Calu3 (cell line): ENCODE measurements at regions of chr12 and their contacts with region 1.

Region 1: GRCh38 chr12:104877123-104877705 is 80.9 kb downstream of the SLC41A2 start:
- DNase-seq: peak; percentile 46
- H3K4me3 Mint-ChIP-seq: no peak overlapping the region
- H3K27ac Mint-ChIP-seq: no peak overlapping the region
- H3K4me1 Mint-ChIP-seq: no peaks in the 10 kb centered on the region
- H3K27me3 Mint-ChIP-seq: no peaks in the 10 kb centered on the region
- CTCF ChIP-seq: peak; percentile 17

Region 2: GRCh38 chr12:104201238-104202001 is 675.8 kb before region 1 on chr12:
- CTCF ChIA-PET with region 1: no interaction called
- intact Hi-C with region 1: loop called (anchors 1 kb)
- DNase-seq: peak; percentile 48
- H3K4me3 Mint-ChIP-seq: no peak overlapping the region
- H3K27ac Mint-ChIP-seq: no peak overlapping the region
- H3K4me1 Mint-ChIP-seq: no peaks in the 10 kb centered on the region
- H3K27me3 Mint-ChIP-seq: no peaks in the 10 kb centered on the region
- CTCF ChIP-seq: peak; percentile 84

Region 3: GRCh38 chr12:104680066-104680465 is 197.1 kb before region 1 on chr12:
- CTCF ChIA-PET with region 1: no interaction called
- intact Hi-C with region 1: loop called (anchors 10 kb)
- DNase-seq: no peak
- H3K4me3 Mint-ChIP-seq: no peak overlapping the region
- H3K27ac Mint-ChIP-seq: no peak overlapping the region
- H3K4me1 Mint-ChIP-seq: peaks cover 19% of the 10 kb centered on the region
- H3K27me3 Mint-ChIP-seq: no peaks in the 10 kb centered on the region
- CTCF ChIP-seq: no peak

Region 4: DNA sequence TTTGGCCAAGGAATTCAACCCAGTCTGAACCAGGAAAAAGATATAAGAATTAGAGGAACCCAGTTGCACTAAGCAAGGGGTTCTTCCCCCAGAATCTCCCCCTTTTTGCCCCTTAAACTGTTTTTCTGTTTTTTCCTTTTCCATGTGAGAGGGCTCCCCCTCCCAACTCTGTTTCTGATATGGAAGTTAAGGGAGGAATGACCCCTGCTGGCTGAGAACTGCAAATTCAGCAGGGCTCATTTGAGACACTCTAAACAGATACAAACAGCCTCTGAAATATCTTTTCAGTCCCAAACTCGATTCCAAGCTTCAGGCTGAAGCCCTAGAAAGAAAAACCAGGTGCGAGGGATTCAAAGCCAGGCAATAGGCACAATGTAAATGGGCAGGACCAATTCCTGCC is 51.8 kb before region 1 on chr12:
- CTCF ChIA-PET with region 1: no interaction called
- intact Hi-C with region 1: no loop called
- DNase-seq: no peak
- H3K4me3 Mint-ChIP-seq: no peak overlapping the region
- H3K27ac Mint-ChIP-seq: no peak overlapping the region
- H3K4me1 Mint-ChIP-seq: no peaks in the 10 kb centered on the region
- H3K27me3 Mint-ChIP-seq: no peaks in the 10 kb centered on the region
- CTCF ChIP-seq: no peak

Region 5: DNA sequence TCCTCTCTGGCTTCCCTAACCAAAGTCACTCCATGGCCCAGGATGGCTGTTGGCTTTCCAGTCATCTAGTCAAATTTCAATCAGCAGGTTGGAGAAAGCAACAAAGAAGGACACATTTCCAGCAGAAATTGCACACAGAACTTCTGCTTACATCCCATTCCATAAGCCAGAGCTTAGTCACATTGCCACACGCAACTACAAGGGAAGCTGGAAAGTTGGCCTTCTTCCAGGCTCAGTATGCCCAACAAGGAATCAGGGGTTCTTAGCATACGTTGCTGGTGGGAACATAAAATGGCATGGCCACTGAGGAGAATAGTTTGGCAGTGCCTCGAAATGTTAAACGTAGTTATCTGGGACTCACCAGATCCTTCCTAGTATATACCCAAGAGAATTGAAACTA is 368.1 kb after region 1 on chr12:
- CTCF ChIA-PET with region 1: no interaction called
- intact Hi-C with region 1: no loop called
- DNase-seq: no peak
- H3K4me3 Mint-ChIP-seq: no peak overlapping the region
- H3K27ac Mint-ChIP-seq: no peak overlapping the region
- H3K4me1 Mint-ChIP-seq: no peaks in the 10 kb centered on the region
- H3K27me3 Mint-ChIP-seq: no peaks in the 10 kb centered on the region
- CTCF ChIP-seq: no peak

Region 6: GRCh38 chr12:105330283-105330930 is 453.2 kb after region 1 on chr12 and contains the start of gene C12orf75:
- CTCF ChIA-PET with region 1: no interaction called
- intact Hi-C with region 1: no loop called
- DNase-seq: peak; percentile 95
- H3K4me3 Mint-ChIP-seq: peak within 1 kb of the TSS; percentile 78
- H3K27ac Mint-ChIP-seq: peak within 1 kb of the TSS; percentile 92
- H3K4me1 Mint-ChIP-seq: peaks cover 74% of the 10 kb centered on the region
- H3K27me3 Mint-ChIP-seq: no peaks in the 10 kb centered on the region
- CTCF ChIP-seq: no peak
- total RNA-seq, gene C12orf75: 336 and 363 TPM in 2 replicates